Mammary epithelial cell (primary cell): ENCODE measurements at regions of chr3 and their contacts with region 1.

Region 1: GRCh38 chr3:133805527-133806475 is at the start of gene SRPRB:
- DNase-seq: peak; percentile 94
- H3K4me3 ChIP-seq: peak within 1 kb of the TSS; percentile 68 to 86 (median 78)
- H3K27ac ChIP-seq: peak within 1 kb of the TSS; percentile 66
- H3K4me1 ChIP-seq: peaks cover 4% of the 10 kb centered on the region
- H3K27me3 ChIP-seq: no peaks in the 10 kb centered on the region
- CTCF ChIP-seq: no peak
- total RNA-seq, gene SRPRB: 79.0 to 92.6 TPM

Region 2: DNA sequence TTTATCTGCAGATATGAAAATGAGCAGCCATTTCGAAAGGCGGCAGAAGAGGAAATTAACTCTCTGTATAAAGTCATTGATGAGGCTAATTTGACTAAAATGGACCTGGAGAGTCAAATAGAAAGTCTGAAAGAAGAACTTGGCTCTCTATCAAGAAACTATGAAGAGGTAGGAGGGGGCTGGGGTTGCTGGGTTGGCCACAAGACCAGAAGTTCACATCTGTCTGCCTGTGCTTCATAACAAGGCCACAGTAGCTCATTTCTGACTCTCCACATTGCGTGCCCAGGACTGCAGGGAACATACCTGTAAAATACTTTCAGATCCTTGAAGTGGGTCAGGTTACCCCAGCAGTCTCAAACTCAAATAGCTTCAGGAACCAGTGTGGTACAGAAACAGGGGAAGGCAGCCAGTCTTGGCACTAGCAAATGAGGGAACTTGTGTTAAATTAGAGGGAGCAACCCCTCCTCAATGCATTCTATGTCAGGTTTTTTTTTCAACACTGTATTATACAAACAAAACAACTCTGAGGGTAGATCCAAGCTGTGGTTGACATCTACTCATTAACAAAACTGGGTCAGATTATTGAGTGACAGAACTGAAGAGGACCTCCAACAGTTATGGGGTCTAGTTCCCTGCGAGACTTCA is 357.2 kb before region 1 on chr3:
- CTCF ChIA-PET with region 1: no interaction called
- dilution Hi-C with region 1: no loop called
- in situ Hi-C with region 1: loop called in 1 of 2 experiments (anchors 10 kb)
- intact Hi-C with region 1: no loop called
- DNase-seq: no peak
- H3K4me3 ChIP-seq: no peak overlapping the region
- H3K27ac ChIP-seq: no peak overlapping the region
- H3K4me1 ChIP-seq: peaks cover 11% of the 10 kb centered on the region
- H3K27me3 ChIP-seq: no peaks in the 10 kb centered on the region
- CTCF ChIP-seq: no peak

Region 3: DNA sequence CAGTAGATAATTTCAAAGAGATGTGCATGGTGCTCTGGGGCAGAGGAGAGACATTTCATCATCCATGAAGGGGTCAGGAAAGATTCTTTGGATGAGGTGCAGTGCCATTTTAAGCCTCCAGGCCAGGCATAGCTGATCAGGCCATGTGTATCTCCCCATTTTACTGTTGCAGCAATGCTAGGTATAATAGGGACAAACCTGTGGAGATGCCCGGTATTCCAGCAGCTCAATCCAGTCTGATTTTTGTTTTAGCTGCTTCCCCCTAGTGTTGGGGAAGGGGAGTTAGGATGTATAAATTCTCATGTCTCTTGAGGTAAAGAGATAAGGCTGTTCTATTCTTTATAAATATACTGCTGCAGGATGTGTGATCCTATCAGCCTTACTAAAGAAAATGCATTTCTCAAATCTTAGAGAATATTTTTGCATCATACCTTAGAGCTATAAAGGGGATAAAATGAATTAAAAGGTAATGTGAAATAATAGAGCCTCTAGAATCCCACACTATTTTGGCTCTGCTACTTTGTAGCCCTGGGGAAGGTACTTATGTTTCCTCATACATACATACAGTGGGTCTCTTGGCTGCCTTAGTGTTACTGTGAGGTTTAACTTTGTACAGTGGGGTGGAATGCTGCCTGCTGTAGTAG is 227.1 kb before region 1 on chr3:
- CTCF ChIA-PET with region 1: no interaction called
- dilution Hi-C with region 1: no loop called
- in situ Hi-C with region 1: no loop called
- intact Hi-C with region 1: loop called (anchors 5 kb)
- DNase-seq: peak; percentile 46
- H3K4me3 ChIP-seq: no peak overlapping the region
- H3K27ac ChIP-seq: no peak overlapping the region
- H3K4me1 ChIP-seq: peaks cover 8% of the 10 kb centered on the region
- H3K27me3 ChIP-seq: no peaks in the 10 kb centered on the region
- CTCF ChIP-seq: peak; percentile 61 to 66

Region 4: DNA sequence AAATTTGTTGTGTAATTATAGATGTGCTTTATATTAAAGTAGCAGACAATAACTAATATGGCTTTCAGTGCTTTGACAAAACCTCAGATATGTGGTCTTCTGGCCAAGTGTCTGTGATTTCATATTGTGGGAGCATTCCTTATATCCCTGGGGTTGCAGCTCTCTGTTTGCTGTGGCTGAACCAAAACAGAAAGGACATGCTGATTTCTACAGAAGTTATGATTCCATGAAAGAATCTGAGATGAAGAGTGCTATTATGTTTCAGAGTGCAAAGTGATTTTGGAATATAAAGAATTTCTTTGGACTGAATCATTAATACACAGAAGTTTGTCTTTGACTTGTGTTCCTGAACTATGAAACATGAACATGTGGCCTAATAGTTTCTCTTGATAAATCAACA is 195.8 kb before region 1 on chr3:
- CTCF ChIA-PET with region 1: no interaction called
- dilution Hi-C with region 1: no loop called
- in situ Hi-C with region 1: no loop called
- intact Hi-C with region 1: no loop called
- DNase-seq: no peak
- H3K4me3 ChIP-seq: no peak overlapping the region
- H3K27ac ChIP-seq: no peak overlapping the region
- H3K4me1 ChIP-seq: no peaks in the 10 kb centered on the region
- H3K27me3 ChIP-seq: no peaks in the 10 kb centered on the region
- CTCF ChIP-seq: no peak

Region 5: GRCh38 chr3:133661454-133662277 is 144.1 kb before region 1 on chr3 and contains the start of gene TOPBP1:
- CTCF ChIA-PET with region 1: no interaction called
- dilution Hi-C with region 1: no loop called
- in situ Hi-C with region 1: loop called in 1 of 2 experiments (anchors 10 kb)
- intact Hi-C with region 1: loop called (anchors 1 kb)
- DNase-seq: peak; percentile 68
- H3K4me3 ChIP-seq: peak within 1 kb of the TSS; percentile 54 to 93 (median 90)
- H3K27ac ChIP-seq: peak within 1 kb of the TSS; percentile 86
- H3K4me1 ChIP-seq: peaks cover 27% of the 10 kb centered on the region
- H3K27me3 ChIP-seq: no peaks in the 10 kb centered on the region
- CTCF ChIP-seq: no peak
- total RNA-seq, gene TOPBP1: 23.9 to 25.8 TPM

Region 6: DNA sequence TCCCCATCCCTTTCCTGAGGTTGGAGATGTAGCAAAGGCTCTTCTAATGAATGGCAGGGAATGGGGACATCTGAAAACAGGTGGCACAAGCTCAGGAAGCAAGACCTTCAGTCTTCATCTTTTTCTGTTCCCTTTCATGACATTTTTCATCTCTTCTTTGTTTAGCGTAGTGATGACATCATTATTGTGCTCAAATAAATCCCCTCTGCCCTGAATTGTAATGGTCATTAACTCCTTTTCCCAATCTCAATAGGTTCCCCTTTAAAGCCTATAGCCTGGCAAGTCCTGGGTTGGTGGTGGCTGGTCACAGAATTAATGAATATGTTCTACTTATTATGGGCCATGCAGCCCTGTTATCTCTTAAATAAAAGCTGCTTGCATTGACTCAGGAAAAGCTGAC is 38.2 kb before region 1 on chr3:
- CTCF ChIA-PET with region 1: no interaction called
- dilution Hi-C with region 1: no loop called
- in situ Hi-C with region 1: no loop called
- intact Hi-C with region 1: no loop called
- DNase-seq: no peak
- H3K4me3 ChIP-seq: no peak overlapping the region
- H3K27ac ChIP-seq: no peak overlapping the region
- H3K4me1 ChIP-seq: no peaks in the 10 kb centered on the region
- H3K27me3 ChIP-seq: peaks cover 5% of the 10 kb centered on the region
- CTCF ChIP-seq: no peak

Region 7: GRCh38 chr3:133821767-133822638 is 16.2 kb after region 1 on chr3:
- CTCF ChIA-PET with region 1: no interaction called
- dilution Hi-C with region 1: no loop called
- in situ Hi-C with region 1: no loop called
- intact Hi-C with region 1: loop called (anchors 1 kb)
- DNase-seq: peak; percentile 89
- H3K4me3 ChIP-seq: no peak overlapping the region
- H3K27ac ChIP-seq: no peak overlapping the region
- H3K4me1 ChIP-seq: peaks cover 36% of the 10 kb centered on the region
- H3K27me3 ChIP-seq: no peaks in the 10 kb centered on the region
- CTCF ChIP-seq: peak; percentile 41 to 53

Region 8: GRCh38 chr3:134212906-134213665 is 407.3 kb after region 1 on chr3:
- CTCF ChIA-PET with region 1: no interaction called
- dilution Hi-C with region 1: no loop called
- in situ Hi-C with region 1: no loop called
- intact Hi-C with region 1: no loop called
- DNase-seq: peak; percentile 83
- H3K4me3 ChIP-seq: no peak overlapping the region
- H3K27ac ChIP-seq: no peak overlapping the region
- H3K4me1 ChIP-seq: peaks cover 33% of the 10 kb centered on the region
- H3K27me3 ChIP-seq: no peaks in the 10 kb centered on the region
- CTCF ChIP-seq: peak; percentile 99 to 100

Region 9: GRCh38 chr3:134485718-134486576 is 680.1 kb after region 1 on chr3 and contains the starts of genes ANAPC13 and CEP63:
- CTCF ChIA-PET with region 1: no interaction called
- dilution Hi-C with region 1: no loop called
- in situ Hi-C with region 1: no loop called
- intact Hi-C with region 1: loop called (anchors 5 kb)
- DNase-seq: peak; percentile 98
- H3K4me3 ChIP-seq: peak within 1 kb of the TSS; percentile 70 to 90 (median 76)
- H3K27ac ChIP-seq: peak within 1 kb of the TSS; percentile 87
- H3K4me1 ChIP-seq: peaks cover 38% of the 10 kb centered on the region
- H3K27me3 ChIP-seq: no peaks in the 10 kb centered on the region
- CTCF ChIP-seq: no peak
- total RNA-seq, gene ANAPC13: 32.2 to 40.5 TPM
- total RNA-seq, gene CEP63: 7.2 to 25.3 TPM